ENCODE measurements at regions of chrX and their contacts with region 1.

Region 1: GRCh38 chrX:66200855-66201795 is 37.1 kb downstream of the HEPH start:
- DNase-seq: peak in 1 of 2 experiments; percentile 10
- H3K4me3 ChIP-seq: no peak overlapping the region
- H3K4me3 Mint-ChIP-seq: no peak overlapping the region
- H3K27ac Mint-ChIP-seq: peak overlapping the region; percentile 15
- H3K4me1 ChIP-seq: peaks cover 22% of the 10 kb centered on the region
- H3K4me1 Mint-ChIP-seq: peaks cover 23% of the 10 kb centered on the region
- H3K27me3 ChIP-seq: no peaks in the 10 kb centered on the region
- H3K27me3 Mint-ChIP-seq: no peaks in the 10 kb centered on the region
- CTCF ChIP-seq: no peak

Region 2: GRCh38 chrX:66130469-66130868 is 70.7 kb before region 1 on chrX:
- CTCF ChIA-PET with region 1: no interaction called
- POLR2A ChIA-PET with region 1: no interaction called
- intact Hi-C with region 1: no loop called
- DNase-seq: no peak
- H3K4me3 ChIP-seq: no peak overlapping the region
- H3K4me3 Mint-ChIP-seq: no peak overlapping the region
- H3K27ac Mint-ChIP-seq: no peak overlapping the region
- H3K4me1 ChIP-seq: no peaks in the 10 kb centered on the region
- H3K4me1 Mint-ChIP-seq: no peaks in the 10 kb centered on the region
- H3K27me3 ChIP-seq: no peaks in the 10 kb centered on the region
- H3K27me3 Mint-ChIP-seq: no peaks in the 10 kb centered on the region
- CTCF ChIP-seq: no peak

Region 3: GRCh38 chrX:66163849-66164411 is 37.2 kb before region 1 on chrX and contains the start of gene HEPH:
- CTCF ChIA-PET with region 1: interaction called, 7 read pairs
- POLR2A ChIA-PET with region 1: no interaction called
- intact Hi-C with region 1: loop called (anchors 2 kb)
- DNase-seq: peak in 1 of 2 experiments; percentile 5
- H3K4me3 ChIP-seq: peak within 1 kb of the TSS; percentile 42
- H3K4me3 Mint-ChIP-seq: peak within 1 kb of the TSS; percentile 76
- H3K27ac Mint-ChIP-seq: peak within 1 kb of the TSS; percentile 89
- H3K4me1 ChIP-seq: 0 out of 2 replicates have a peak, but pooled peaks cover 8% of the 10 kb centered on the region
- H3K4me1 Mint-ChIP-seq: peaks cover 6% of the 10 kb centered on the region
- H3K27me3 ChIP-seq: no peaks in the 10 kb centered on the region
- H3K27me3 Mint-ChIP-seq: no peaks in the 10 kb centered on the region
- CTCF ChIP-seq: no peak
- total RNA-seq, gene HEPH: 27.9 and 31.1 TPM in 2 replicates

Region 4: GRCh38 chrX:66262807-66263206 is 61.7 kb after region 1 on chrX:
- CTCF ChIA-PET with region 1: no interaction called
- POLR2A ChIA-PET with region 1: no interaction called
- intact Hi-C with region 1: loop called (anchors 5 kb)
- DNase-seq: no peak
- H3K4me3 ChIP-seq: no peak overlapping the region
- H3K4me3 Mint-ChIP-seq: no peak overlapping the region
- H3K27ac Mint-ChIP-seq: no peak overlapping the region
- H3K4me1 ChIP-seq: no peaks in the 10 kb centered on the region; the same call in 1 of the 2 replicates
- H3K4me1 Mint-ChIP-seq: peaks cover 5% of the 10 kb centered on the region
- H3K27me3 ChIP-seq: no peaks in the 10 kb centered on the region
- H3K27me3 Mint-ChIP-seq: no peaks in the 10 kb centered on the region
- CTCF ChIP-seq: no peak

Measured in Caco-2 (cell line).